ENCODE measurements at regions of chr7 and their contacts with region 1.

Region 1: DNA sequence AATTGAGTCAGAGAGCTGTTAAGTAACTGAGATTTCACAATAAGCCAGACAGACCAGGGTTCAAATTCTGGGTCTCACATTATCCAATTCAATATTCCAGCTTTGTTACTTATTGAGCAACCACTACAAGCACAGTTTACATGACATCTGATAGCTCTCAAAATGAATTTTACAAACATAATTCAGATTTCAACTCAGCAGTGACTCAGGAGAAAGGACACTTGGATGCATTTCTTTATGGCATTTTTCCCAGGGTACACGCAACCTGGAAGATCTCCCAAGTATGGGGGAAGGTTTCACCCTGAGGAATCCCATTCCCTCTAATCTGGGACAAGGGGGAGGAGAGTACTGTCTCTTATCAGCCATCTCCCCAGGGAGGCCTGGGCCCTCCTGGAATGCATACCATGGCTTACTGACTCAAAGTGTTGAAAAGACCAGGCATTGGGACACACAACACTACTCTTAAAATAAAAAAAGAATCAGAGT is 102.4 kb downstream of the CFTR start:
- DNase-seq: no peak
- ATAC-seq: no peak
- H3K4me3 Mint-ChIP-seq: no peak overlapping the region
- H3K27ac Mint-ChIP-seq: no peak overlapping the region
- H3K4me1 Mint-ChIP-seq: no peaks in the 10 kb centered on the region
- H3K27me3 Mint-ChIP-seq: no peaks in the 10 kb centered on the region

Region 2: GRCh38 chr7:117550625-117551024 is 31.6 kb before region 1 on chr7:
- CTCF ChIA-PET with region 1: no interaction called
- POLR2A ChIA-PET with region 1: no interaction called
- intact Hi-C with region 1: loop called in 1 of 2 experiments (anchors 1 kb)
- DNase-seq: no peak
- ATAC-seq: no peak
- H3K4me3 Mint-ChIP-seq: no peak overlapping the region
- H3K27ac Mint-ChIP-seq: no peak overlapping the region
- H3K4me1 Mint-ChIP-seq: no peaks in the 10 kb centered on the region
- H3K27me3 Mint-ChIP-seq: no peaks in the 10 kb centered on the region

Region 3: DNA sequence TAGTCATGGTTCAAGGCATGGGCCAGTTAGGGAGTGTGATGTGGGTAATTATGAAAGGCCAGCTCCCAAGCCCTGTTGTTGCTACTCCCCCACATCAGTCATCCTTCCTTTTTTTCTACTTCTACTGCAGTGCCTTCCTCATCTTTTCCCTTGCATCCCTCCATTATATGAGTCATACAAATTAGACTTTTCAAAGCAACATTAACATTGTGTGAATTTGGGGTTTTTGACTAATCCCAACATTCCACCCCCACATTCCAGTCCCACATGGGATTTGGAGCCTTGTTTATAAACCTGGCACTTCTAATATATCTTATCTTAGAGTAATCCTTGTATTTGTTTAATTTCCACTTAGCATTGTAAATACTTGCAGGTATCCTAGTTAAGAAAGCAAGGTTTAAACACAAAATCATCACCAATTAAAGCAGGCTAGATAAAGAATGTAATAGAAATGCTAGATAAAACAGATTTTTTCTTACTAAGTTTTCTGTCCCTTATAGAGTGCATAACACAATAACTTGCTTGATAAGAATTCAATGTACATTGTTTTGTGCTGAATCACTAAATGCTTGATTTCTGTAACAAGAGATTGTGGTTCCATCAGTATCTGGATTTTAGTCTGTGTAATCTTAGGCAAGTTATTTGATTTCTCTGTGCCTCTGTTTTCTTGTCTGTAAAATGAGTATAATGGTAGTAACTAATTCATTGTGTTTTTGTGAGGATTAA is 63.4 kb after region 1 on chr7:
- CTCF ChIA-PET with region 1: no interaction called
- POLR2A ChIA-PET with region 1: no interaction called
- intact Hi-C with region 1: loop called in 1 of 2 experiments (anchors 10 kb)
- DNase-seq: no peak
- ATAC-seq: no peak
- H3K4me3 Mint-ChIP-seq: no peak overlapping the region
- H3K27ac Mint-ChIP-seq: no peak overlapping the region
- H3K4me1 Mint-ChIP-seq: no peaks in the 10 kb centered on the region
- H3K27me3 Mint-ChIP-seq: peaks cover 3% of the 10 kb centered on the region

Measured in activated CD4-positive, alpha-beta T cell treated with anti-CD3 and anti-CD28 coated beads for 36 hours (primary cell).